GM18951 (cell line): ENCODE measurements at regions of chr4 and their contacts with region 1.

Region 1: DNA sequence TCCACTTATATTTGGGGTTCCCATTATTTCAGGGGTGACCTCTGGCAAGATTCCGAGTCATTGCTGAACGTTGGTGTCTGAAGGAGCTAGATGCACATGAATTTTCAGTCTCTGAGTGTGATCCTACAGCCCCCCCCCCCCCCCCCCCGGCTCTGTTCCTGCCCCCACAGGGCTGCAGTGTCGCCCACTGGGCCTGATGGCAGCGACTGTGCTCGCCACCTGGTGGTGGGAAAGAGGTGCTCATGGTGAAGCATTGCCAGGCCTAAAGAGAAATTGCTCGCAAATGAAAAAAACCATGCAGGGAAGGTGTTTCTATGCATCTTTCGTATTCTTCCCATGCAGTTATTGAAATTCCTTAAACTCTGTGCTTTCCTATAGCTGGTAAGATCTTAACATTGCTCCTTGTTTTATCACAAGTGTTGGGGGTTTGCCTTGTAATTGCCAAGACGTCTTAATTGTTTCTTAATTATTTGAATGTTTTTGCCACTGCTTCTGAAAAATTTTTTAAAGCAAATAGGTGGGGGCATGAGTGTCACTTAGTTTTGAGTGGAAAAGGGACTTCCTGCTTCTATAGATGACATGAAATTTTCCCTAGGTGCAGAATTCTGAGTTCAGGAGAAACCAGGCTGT is 63.2 kb downstream of the CLDN22 start:
- POLR2A ChIP-seq: no peak

Region 2: DNA sequence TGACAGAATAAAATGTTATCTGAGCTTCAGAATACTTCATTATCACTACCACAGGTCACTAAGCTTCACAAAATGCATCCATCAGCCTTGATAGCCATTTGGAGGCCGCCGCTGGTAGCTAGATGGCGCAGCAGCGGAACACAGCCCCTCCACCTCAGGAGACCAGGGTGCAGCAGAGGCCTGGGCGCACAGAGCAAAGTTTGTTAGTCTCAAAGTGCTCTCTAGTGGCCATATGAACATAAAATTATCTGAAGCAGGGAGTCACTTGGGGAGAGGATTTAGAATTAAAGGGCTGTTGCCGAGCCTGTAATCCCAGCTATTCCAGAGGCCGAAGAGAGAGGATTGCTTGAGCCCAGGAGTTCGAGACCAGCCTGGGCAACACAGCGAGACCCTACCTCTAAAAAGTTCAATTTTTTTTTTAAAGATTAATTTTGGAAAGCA is 331.6 kb before region 1 on chr4:
- in situ Hi-C with region 1: loop called (anchors 10 kb)
- POLR2A ChIP-seq: no peak

Region 3: DNA sequence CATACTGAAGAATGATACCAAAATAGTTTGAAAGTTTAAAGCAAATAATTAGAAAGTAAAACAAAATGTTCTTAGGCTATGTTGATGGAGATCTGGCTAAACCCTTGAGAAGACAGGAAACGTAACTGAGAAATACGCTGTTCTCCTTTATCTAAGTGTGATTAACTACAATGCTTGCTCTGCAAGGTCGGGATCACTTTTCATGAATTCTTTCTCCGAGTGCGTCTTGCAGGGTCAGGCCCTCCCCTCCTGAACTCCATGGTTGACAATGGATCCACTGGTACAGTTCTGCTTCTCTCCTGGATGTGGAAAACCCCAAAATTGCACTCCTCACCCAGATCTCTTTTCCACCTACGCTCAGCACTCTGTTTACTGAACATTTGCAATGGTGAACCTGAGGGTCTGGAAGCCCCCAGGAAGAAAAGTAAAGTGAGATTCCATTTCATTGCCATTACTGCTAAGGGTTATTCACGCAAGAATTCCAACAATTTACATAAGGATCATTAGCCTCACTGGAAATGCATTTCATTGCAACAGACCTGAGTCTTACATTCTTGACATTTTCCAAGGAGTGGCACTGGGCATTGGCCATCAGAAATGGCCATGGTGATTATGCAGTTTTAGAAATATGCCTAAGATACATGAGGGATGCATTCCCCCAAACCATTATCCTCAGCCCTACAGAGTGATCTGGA is 182.4 kb before region 1 on chr4:
- in situ Hi-C with region 1: loop called (anchors 5 kb)
- POLR2A ChIP-seq: no peak